ENCODE measurements at regions of chr1 and their contacts with region 1.

Region 1: GRCh38 chr1:209565759-209566678 is 17.5 kb upstream of the CAMK1G start:
- DNase-seq: peak; percentile 93
- ATAC-seq: peak; percentile 94
- H3K4me3 Mint-ChIP-seq: no peak overlapping the region
- H3K27ac Mint-ChIP-seq: no peak overlapping the region
- H3K4me1 Mint-ChIP-seq: peaks cover 32% of the 10 kb centered on the region
- H3K27me3 Mint-ChIP-seq: peaks cover 15% of the 10 kb centered on the region
- CTCF ChIP-seq: peak; percentile 65

Region 2: GRCh38 chr1:209248649-209249279 is 317.3 kb before region 1 on chr1:
- CTCF ChIA-PET with region 1: interaction called, 21 read pairs
- POLR2A ChIA-PET with region 1: no interaction called
- DNase-seq: peak; percentile 62
- ATAC-seq: peak; percentile 88
- H3K4me3 Mint-ChIP-seq: no peak overlapping the region
- H3K27ac Mint-ChIP-seq: peak overlapping the region; percentile 81
- H3K4me1 Mint-ChIP-seq: peaks cover 41% of the 10 kb centered on the region
- H3K27me3 Mint-ChIP-seq: no peaks in the 10 kb centered on the region
- CTCF ChIP-seq: peak; percentile 86

Region 3: GRCh38 chr1:209513226-209513625 is 52.8 kb before region 1 on chr1:
- CTCF ChIA-PET with region 1: interaction called, 10 read pairs
- POLR2A ChIA-PET with region 1: no interaction called
- DNase-seq: no peak
- ATAC-seq: peak; percentile 95
- H3K4me3 Mint-ChIP-seq: no peak overlapping the region
- H3K27ac Mint-ChIP-seq: no peak overlapping the region
- H3K4me1 Mint-ChIP-seq: peaks cover 17% of the 10 kb centered on the region
- H3K27me3 Mint-ChIP-seq: no peaks in the 10 kb centered on the region
- CTCF ChIP-seq: peak; percentile 63

Region 4: GRCh38 chr1:209549443-209550205 is 16.4 kb before region 1 on chr1:
- CTCF ChIA-PET with region 1: interaction called, 45 read pairs
- POLR2A ChIA-PET with region 1: no interaction called
- DNase-seq: peak; percentile 50
- ATAC-seq: peak; percentile 85
- H3K4me3 Mint-ChIP-seq: peak overlapping the region; percentile 54
- H3K27ac Mint-ChIP-seq: no peak overlapping the region
- H3K4me1 Mint-ChIP-seq: peaks cover 36% of the 10 kb centered on the region
- H3K27me3 Mint-ChIP-seq: peaks cover 55% of the 10 kb centered on the region
- CTCF ChIP-seq: no peak

Region 5: GRCh38 chr1:209585672-209586071 is 19.7 kb after region 1 on chr1:
- CTCF ChIA-PET with region 1: interaction called, 16 read pairs
- POLR2A ChIA-PET with region 1: interaction called, 3 read pairs
- DNase-seq: peak; percentile 49
- ATAC-seq: peak; percentile 51
- H3K4me3 Mint-ChIP-seq: no peak overlapping the region
- H3K27ac Mint-ChIP-seq: no peak overlapping the region
- H3K4me1 Mint-ChIP-seq: no peaks in the 10 kb centered on the region; the same call in 1 of the 2 replicates
- H3K27me3 Mint-ChIP-seq: no peaks in the 10 kb centered on the region; the same call in 1 of the 2 replicates
- CTCF ChIP-seq: no peak

Region 6: GRCh38 chr1:209692745-209693504 is 126.9 kb after region 1 on chr1:
- CTCF ChIA-PET with region 1: interaction called, 12 read pairs
- POLR2A ChIA-PET with region 1: no interaction called
- DNase-seq: peak; percentile 79
- ATAC-seq: peak; percentile 76
- H3K4me3 Mint-ChIP-seq: no peak overlapping the region
- H3K27ac Mint-ChIP-seq: no peak overlapping the region
- H3K4me1 Mint-ChIP-seq: peaks cover 4% of the 10 kb centered on the region
- H3K27me3 Mint-ChIP-seq: peaks cover 16% of the 10 kb centered on the region
- CTCF ChIP-seq: no peak; the same call in 1 of the 2 replicates

Region 7: DNA sequence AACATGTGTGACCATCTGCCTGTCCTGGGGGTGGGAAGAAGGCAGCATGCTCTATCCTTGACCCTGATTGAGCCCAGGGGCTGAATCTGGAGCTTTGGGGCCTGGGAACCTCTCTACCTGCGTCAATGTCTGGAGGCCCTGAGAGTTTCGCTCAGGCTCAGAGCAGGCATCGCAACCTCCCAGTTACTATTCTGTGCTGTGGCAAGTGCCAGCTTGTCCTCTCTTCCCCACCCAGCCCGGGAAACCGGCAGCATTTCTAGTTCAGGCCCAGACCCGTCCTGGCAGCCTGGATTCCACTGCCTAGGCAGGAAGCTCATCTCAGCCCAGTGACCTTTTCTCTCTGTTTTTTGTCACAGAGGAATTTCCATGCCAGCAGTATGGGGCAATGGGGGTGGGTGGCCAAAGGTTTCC is 249.9 kb after region 1 on chr1:
- CTCF ChIA-PET with region 1: no interaction called
- POLR2A ChIA-PET with region 1: no interaction called
- DNase-seq: no peak
- ATAC-seq: no peak; the same call in 1 of the 2 replicates
- H3K4me3 Mint-ChIP-seq: no peak overlapping the region
- H3K27ac Mint-ChIP-seq: no peak overlapping the region
- H3K4me1 Mint-ChIP-seq: no peaks in the 10 kb centered on the region; the same call in 1 of the 2 replicates
- H3K27me3 Mint-ChIP-seq: peaks cover 20% of the 10 kb centered on the region
- CTCF ChIP-seq: no peak